Activated naive CD4-positive, alpha-beta T cell treated with anti-CD3 and anti-CD28 coated beads for 36 hours (primary cell): ENCODE measurements at regions of chr4 and their contacts with region 1.

Region 1: GRCh38 chr4:48269861-48270522 is 354 bp upstream of the TEC start:
- DNase-seq: peak; percentile 93
- H3K4me3 Mint-ChIP-seq: peak overlapping the region; percentile 93
- H3K27ac Mint-ChIP-seq: peak overlapping the region; percentile 83
- H3K4me1 Mint-ChIP-seq: peaks cover 9% of the 10 kb centered on the region
- H3K27me3 Mint-ChIP-seq: no peaks in the 10 kb centered on the region

Region 2: GRCh38 chr4:47914220-47914925 is 355.6 kb before region 1 on chr4 and contains the start of gene NFXL1:
- CTCF ChIA-PET with region 1: no interaction called
- intact Hi-C with region 1: loop called (anchors 1 kb)
- DNase-seq: peak; percentile 97
- H3K4me3 Mint-ChIP-seq: peak within 1 kb of the TSS; percentile 90
- H3K27ac Mint-ChIP-seq: peak within 1 kb of the TSS; percentile 91
- H3K4me1 Mint-ChIP-seq: peaks cover 29% of the 10 kb centered on the region
- H3K27me3 Mint-ChIP-seq: no peaks in the 10 kb centered on the region
- total RNA-seq, gene NFXL1: 10.4 to 11.4 TPM

Region 3: DNA sequence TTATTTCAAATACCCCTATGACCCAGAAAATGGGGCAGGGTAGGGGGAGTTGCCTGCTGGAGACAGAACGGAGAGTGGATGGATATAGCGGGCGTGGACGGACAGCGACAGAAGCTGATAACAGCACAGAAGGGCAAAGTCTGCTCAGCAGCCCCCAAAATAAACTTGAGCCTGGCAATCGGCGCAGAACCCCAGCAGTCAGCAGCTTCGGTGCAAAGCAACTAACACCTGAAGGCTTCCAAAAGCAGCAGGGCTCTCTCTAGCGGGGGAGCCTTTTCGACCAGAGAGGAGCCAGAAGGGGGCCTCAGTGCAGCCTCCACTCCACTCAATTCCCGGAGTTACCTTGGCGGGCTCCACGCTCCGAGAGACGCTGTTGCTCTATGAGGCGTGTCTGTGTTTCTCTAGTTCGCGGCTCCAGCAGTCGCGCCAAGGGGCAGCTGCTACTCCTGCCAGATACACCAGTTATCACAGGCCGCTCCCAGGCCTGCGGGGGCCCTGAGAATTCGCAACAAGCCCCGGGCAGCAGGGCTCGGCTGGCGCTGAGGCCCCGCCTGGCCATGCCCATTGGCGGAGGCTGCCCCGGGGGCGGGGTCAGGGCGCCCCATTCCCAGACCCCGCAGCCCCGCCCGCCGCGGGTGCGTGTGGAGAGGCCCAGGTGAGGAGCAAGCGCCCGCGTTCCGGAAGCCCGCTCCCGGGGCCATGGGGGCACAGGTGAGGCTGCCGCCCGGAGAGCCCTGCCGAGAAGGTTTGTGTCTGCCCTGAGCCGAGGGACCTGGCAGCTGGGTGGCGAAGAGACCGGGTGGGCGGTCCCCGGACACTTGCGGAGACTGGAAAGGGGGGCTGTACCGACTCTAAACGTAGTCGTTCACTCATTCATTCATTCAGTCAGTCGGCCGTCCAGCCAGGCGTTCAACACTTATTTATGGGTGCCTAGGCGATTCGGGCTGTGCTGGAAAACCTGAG is 253.6 kb before region 1 on chr4 and contains the starts of genes CNGA1 and NIPAL1:
- CTCF ChIA-PET with region 1: no interaction called
- intact Hi-C with region 1: loop called (anchors 5 kb)
- DNase-seq: peak; percentile 72
- H3K4me3 Mint-ChIP-seq: peak within 1 kb of the TSS; percentile 81
- H3K27ac Mint-ChIP-seq: peak within 1 kb of the TSS; percentile 46
- H3K4me1 Mint-ChIP-seq: peaks cover 26% of the 10 kb centered on the region
- H3K27me3 Mint-ChIP-seq: peaks cover 5% of the 10 kb centered on the region
- total RNA-seq, gene CNGA1: 0.26 to 0.94 TPM
- total RNA-seq, gene NIPAL1: 1.0 to 2.0 TPM

Region 4: DNA sequence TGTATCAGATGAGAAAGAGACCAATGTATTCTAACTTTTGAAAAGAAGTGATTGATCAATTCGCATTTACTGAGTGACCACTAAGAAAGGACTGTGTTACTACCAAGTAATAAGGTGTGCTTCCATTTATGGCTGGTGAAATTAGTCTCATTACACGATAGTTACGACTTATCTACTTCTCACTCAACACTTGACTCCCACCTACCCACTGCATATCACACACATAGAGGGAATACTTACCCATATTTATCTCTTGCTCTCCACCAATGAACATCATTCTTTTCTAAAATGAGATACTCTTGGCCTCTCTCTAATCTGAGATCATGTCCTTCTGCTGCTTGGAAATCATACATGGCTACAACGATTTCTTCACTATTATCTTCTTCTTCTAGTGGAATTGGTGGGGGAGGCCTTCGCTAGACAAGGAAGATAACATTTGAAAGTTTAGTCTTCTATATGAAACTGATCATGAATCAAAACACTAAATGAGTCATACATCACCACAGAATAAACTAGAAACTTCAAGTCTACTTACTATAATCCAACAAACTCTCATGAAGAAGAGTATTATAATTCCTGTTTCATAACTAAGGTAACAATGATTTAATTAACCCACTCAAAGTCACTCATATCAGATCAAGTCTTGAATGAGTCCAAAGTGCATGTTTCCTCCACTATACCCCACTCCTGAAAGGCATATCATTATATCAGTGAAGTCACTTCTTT is 102.3 kb before region 1 on chr4:
- CTCF ChIA-PET with region 1: no interaction called
- intact Hi-C with region 1: loop called (anchors 2 kb)
- DNase-seq: no peak
- H3K4me3 Mint-ChIP-seq: no peak overlapping the region
- H3K27ac Mint-ChIP-seq: no peak overlapping the region
- H3K4me1 Mint-ChIP-seq: peaks cover 14% of the 10 kb centered on the region
- H3K27me3 Mint-ChIP-seq: no peaks in the 10 kb centered on the region

Region 5: DNA sequence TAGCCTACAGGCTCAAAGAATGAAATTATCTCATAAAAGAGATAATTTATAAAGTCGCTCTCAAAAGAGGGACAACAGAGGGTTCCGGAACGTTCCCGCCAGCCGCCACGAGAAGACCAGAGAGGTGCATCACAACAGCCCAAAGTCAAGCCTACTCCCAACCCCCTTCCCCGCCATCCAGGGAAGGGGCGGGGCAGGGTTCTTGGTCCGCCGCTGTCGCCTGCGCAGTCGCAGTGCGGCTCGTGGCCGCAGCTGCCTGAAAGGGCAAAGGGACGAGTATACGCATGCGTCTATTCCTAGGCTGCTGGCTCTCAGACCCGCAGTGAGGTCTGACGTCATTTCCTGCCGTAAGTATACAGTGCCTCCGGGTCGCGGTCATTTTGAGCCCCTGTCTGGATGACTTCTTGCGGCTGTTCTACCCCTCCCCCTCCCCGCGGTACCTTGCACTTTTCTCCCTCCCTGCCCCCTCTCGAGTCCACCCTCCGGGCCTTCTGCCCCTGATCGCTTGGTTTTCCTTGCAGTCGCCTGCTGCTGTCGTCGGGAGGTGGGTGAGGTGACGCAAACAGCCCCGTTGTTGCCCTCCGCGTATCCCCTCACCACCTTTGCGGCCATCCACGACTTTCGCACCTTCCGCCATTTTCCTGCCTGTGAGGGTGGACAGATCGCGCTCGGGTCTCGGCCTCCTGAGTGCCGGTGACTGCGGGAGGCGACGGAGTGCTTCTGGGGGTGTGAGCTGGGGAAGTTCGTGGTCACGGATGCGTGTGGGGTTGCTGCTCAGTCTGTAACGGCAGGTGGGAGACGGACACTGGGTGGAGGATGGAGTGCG is 560.9 kb after region 1 on chr4 and contains the start of gene OCIAD1:
- CTCF ChIA-PET with region 1: no interaction called
- intact Hi-C with region 1: loop called (anchors 1 kb)
- DNase-seq: peak; percentile 96
- H3K4me3 Mint-ChIP-seq: peak within 1 kb of the TSS; percentile 100
- H3K27ac Mint-ChIP-seq: peak within 1 kb of the TSS; percentile 100
- H3K4me1 Mint-ChIP-seq: peaks cover 23% of the 10 kb centered on the region
- H3K27me3 Mint-ChIP-seq: peaks cover 6% of the 10 kb centered on the region
- total RNA-seq, gene OCIAD1: 91.9 to 99.0 TPM